ENCODE measurements at regions of chr6 and their contacts with region 1.

Region 1: DNA sequence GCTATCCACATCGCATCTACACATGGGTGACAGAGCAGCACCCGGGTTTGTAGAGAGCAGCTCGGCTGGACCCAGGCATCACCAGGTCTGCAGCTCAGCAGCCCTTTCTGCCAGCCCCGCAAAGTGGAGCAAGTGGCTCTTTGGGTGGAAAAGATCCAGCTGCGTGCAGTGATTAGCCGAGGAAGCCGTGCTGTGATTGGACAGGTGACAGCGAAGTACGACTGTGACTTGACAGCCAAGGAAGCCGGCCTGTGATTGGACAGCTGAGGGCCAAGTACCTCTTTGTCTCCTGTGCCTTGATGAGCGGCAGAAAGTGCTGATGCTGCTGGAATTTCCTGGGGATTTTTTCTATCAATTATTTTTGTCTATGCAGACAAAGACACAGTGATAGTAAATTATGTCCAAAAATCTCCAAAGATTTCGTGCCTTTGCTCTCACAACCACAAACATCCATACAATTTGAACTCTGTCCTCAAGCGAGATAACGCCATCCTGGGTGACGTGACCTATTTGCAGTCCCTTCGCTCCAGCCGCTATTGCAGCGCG is 62.3 kb upstream of the GPR31 start:
- DNase-seq: no peak
- H3K4me3 ChIP-seq: no peak overlapping the region
- H3K27ac ChIP-seq: no peak overlapping the region
- H3K4me1 ChIP-seq: no peaks in the 10 kb centered on the region
- H3K27me3 ChIP-seq: no peaks in the 10 kb centered on the region
- CTCF ChIP-seq: no peak
- EP300 ChIP-seq: no peak
- POLR2A ChIP-seq: no peak

Region 2: DNA sequence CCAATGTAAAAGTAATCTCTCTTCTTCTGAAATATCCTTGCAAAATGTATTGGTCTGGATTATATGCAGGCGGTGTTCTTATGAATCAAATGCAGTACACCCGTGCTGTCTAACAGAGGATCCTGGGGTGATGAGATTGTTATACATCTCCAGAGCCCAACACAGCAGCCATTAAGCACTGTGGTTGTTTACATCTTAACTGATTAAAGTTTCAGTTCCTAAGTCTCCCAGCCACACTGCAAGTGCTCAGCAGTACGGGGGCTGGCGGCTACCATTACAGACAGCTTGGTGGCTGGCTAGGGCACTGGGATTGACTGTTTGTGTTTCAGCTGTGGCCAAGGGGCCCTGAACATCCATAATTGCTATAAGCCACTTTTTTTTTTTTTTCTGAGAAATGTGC is 78.1 kb after region 1 on chr6:
- intact Hi-C with region 1: loop called in 1 of 4 experiments (anchors 10 kb)
- DNase-seq: no peak
- H3K4me3 ChIP-seq: no peak overlapping the region
- H3K27ac ChIP-seq: no peak overlapping the region
- H3K4me1 ChIP-seq: no peaks in the 10 kb centered on the region
- H3K27me3 ChIP-seq: no peaks in the 10 kb centered on the region
- CTCF ChIP-seq: no peak
- EP300 ChIP-seq: no peak
- POLR2A ChIP-seq: no peak

Region 3: GRCh38 chr6:167898673-167899311 is 678.8 kb after region 1 on chr6:
- intact Hi-C with region 1: loop called in 2 of 4 experiments (anchors 5 to 10 kb)
- DNase-seq: no peak
- H3K4me3 ChIP-seq: no peak overlapping the region
- H3K27ac ChIP-seq: no peak overlapping the region
- H3K4me1 ChIP-seq: no peaks in the 10 kb centered on the region
- H3K27me3 ChIP-seq: no peaks in the 10 kb centered on the region
- CTCF ChIP-seq: peak; percentile 43 to 60 (median 54)
- EP300 ChIP-seq: no peak
- POLR2A ChIP-seq: no peak

Region 4: DNA sequence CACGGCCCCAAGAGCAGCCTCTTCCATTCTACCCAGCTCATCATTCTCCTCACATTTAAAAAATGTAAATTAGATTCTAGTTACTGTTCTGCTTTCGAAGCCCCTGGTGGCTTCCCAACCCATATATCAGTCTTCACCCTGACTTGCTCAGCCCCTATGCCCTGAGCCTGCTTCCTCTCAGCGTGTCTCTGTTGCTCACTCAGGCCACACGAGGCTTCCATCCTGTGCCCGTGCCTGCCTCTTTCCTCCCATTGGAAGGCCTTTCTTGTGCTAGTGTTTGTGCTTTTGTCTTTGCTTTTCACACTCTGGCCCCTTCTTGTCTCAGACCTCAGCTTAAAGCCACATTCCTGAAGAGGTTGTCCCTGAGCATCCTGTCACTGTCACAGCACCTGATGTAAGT is 684.8 kb after region 1 on chr6:
- intact Hi-C with region 1: loop called in 2 of 4 experiments (anchors 5 to 10 kb)
- DNase-seq: no peak
- H3K4me3 ChIP-seq: no peak overlapping the region
- H3K27ac ChIP-seq: no peak overlapping the region
- H3K4me1 ChIP-seq: no peaks in the 10 kb centered on the region
- H3K27me3 ChIP-seq: no peaks in the 10 kb centered on the region
- CTCF ChIP-seq: no peak
- EP300 ChIP-seq: no peak
- POLR2A ChIP-seq: no peak

Measured in ovary (tissue), 10 donors.